Psoas muscle (tissue), 8 donors: ENCODE measurements at regions of chr3 and their contacts with region 1.

Region 1: GRCh38 chr3:134373994-134374790 is at the start of gene AMOTL2:
- DNase-seq: peak; percentile 90 to 96
- ATAC-seq: peak; percentile 85 to 92 (median 90)
- H3K4me3 ChIP-seq: peak within 1 kb of the TSS; percentile 86
- H3K27ac ChIP-seq: peak within 1 kb of the TSS; percentile 93
- H3K4me1 ChIP-seq: peaks cover 50% of the 10 kb centered on the region
- H3K27me3 ChIP-seq: no peaks in the 10 kb centered on the region
- CTCF ChIP-seq: no peak
- total RNA-seq, gene AMOTL2: 16.5 to 36.6 (median 29.6) TPM

Region 2: GRCh38 chr3:134308350-134308891 is 65.8 kb before region 1 on chr3:
- intact Hi-C with region 1: loop called (anchors 1 kb)
- DNase-seq: peak; percentile 85 to 87
- ATAC-seq: peak; percentile 65 to 79 (median 74)
- H3K4me3 ChIP-seq: peak overlapping the region; percentile 29
- H3K27ac ChIP-seq: peak overlapping the region; percentile 72
- H3K4me1 ChIP-seq: peaks cover 31% of the 10 kb centered on the region
- H3K27me3 ChIP-seq: no peaks in the 10 kb centered on the region
- CTCF ChIP-seq: peak; percentile 100

Region 3: DNA sequence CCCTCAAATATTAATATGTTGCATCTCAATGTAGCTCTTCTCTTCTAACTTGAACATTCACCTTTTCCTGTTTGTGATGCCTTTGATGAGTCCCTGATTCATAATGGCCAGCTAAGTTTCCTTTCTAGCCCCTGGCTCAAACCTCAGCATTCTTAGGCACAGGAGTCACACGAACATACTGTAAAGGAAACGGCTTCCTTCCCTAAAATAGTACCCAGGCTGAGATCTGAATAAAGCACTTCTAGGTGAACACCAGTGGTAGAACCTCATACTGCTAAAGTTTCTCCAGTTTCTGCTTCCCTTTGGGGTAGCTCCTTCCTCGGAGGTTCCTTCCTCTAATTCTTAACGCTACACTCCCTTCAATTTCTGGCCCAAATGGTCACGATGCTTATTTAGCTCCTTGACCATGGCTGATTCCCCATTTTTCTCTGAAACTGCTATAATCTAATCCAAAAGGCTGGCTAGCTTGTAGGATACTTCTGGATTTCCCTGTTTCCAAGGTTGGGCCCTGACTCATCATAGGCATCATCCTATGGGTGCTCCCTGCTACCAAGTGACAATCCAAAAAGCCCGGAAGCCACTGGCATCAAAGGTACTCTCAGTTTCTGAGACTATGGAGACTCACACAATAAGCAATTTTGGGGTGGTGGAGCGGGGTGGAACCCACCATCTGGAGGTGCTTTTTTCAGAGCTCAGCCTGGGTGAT is 109.2 kb after region 1 on chr3:
- intact Hi-C with region 1: loop called in 1 of 2 experiments (anchors 5 kb)
- DNase-seq: no peak
- ATAC-seq: no peak
- H3K4me3 ChIP-seq: no peak overlapping the region
- H3K27ac ChIP-seq: peak overlapping the region; percentile 97
- H3K4me1 ChIP-seq: peaks cover 44% of the 10 kb centered on the region
- H3K27me3 ChIP-seq: no peaks in the 10 kb centered on the region
- CTCF ChIP-seq: no peak